HEK293 (cell line): ENCODE measurements at regions of chr19 and their contacts with region 1.

Region 1: DNA sequence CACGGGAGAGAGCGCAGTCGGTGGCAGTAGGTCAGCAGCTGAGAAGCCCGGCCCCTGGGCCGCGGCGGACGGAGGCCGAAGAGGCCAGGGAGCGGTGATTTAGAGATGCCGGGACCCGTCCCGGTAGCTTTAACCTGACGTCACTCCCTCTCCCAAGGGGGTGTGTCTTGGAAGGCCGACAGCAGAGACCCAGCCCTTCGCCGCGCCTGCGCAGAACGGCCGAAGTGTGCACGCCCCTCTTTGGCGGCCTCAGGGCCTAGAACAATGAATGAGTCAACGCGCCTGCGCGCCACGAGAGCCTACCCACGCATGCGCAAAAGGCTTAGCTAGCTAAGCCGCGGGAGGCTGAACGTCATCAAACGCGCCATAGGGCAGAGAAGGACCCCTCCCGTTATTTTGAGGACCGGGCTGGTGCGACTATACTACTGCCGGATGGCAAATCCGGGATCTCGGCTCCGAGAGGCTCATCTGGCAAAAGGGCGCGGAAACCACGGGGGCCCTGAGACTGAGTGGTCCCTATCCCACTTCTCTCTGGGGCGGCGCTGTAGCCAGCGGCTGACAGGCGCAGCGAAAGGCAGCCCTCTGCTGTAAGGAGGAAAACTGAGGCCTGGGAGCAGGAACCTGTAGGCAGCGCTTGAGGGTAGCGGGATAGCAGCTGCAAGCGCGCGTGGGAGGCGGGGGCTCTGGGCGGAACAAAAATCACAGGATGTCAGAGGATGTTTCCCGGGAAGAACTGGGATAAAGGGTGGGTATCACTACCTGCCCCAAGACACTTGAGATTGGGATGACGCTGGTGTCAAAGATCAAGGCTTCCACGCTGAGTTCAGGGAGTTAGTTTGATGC is at the starts of genes IRGQ and ZNF576:
- H3K4me3 ChIP-seq: peak within 1 kb of the TSS; percentile 54
- H3K27ac ChIP-seq: peak within 1 kb of the TSS; percentile 95
- H3K4me1 ChIP-seq: peaks cover 24% of the 10 kb centered on the region
- CTCF ChIP-seq: peak; percentile 99

Region 2: GRCh38 chr19:43290568-43291359 is 305.5 kb before region 1 on chr19:
- CTCF ChIA-PET with region 1: no interaction called
- POLR2A ChIA-PET with region 1: no interaction called
- H3K4me3 ChIP-seq: no peak overlapping the region
- H3K27ac ChIP-seq: no peak overlapping the region
- H3K4me1 ChIP-seq: 0 out of 2 replicates have a peak, but pooled peaks cover 3% of the 10 kb centered on the region
- CTCF ChIP-seq: no peak

Region 3: GRCh38 chr19:43519436-43520088 is 76.7 kb before region 1 on chr19:
- CTCF ChIA-PET with region 1: interaction called, 35 read pairs
- POLR2A ChIA-PET with region 1: interaction called, 9 read pairs
- H3K4me3 ChIP-seq: no peak overlapping the region
- H3K27ac ChIP-seq: no peak overlapping the region
- H3K4me1 ChIP-seq: peaks cover 3% of the 10 kb centered on the region; the same call in 1 of the 2 replicates
- CTCF ChIP-seq: peak; percentile 92

Region 4: GRCh38 chr19:43532962-43533545 is 63.2 kb before region 1 on chr19 and contains the start of gene ZNF575:
- CTCF ChIA-PET with region 1: interaction called, 26 read pairs
- POLR2A ChIA-PET with region 1: interaction called, 18 read pairs
- H3K4me3 ChIP-seq: peak within 1 kb of the TSS; percentile 9
- H3K27ac ChIP-seq: peak within 1 kb of the TSS; percentile 73
- H3K4me1 ChIP-seq: peaks cover 26% of the 10 kb centered on the region
- CTCF ChIP-seq: no peak; the same call in 1 of the 2 replicates

Region 5: GRCh38 chr19:43564800-43565199 is 31.4 kb before region 1 on chr19:
- CTCF ChIA-PET with region 1: interaction called, 91 read pairs
- POLR2A ChIA-PET with region 1: interaction called, 10 read pairs
- H3K4me3 ChIP-seq: no peak overlapping the region
- H3K27ac ChIP-seq: no peak overlapping the region
- H3K4me1 ChIP-seq: peaks cover 2% of the 10 kb centered on the region; the same call in 1 of the 2 replicates
- CTCF ChIP-seq: no peak

Region 6: DNA sequence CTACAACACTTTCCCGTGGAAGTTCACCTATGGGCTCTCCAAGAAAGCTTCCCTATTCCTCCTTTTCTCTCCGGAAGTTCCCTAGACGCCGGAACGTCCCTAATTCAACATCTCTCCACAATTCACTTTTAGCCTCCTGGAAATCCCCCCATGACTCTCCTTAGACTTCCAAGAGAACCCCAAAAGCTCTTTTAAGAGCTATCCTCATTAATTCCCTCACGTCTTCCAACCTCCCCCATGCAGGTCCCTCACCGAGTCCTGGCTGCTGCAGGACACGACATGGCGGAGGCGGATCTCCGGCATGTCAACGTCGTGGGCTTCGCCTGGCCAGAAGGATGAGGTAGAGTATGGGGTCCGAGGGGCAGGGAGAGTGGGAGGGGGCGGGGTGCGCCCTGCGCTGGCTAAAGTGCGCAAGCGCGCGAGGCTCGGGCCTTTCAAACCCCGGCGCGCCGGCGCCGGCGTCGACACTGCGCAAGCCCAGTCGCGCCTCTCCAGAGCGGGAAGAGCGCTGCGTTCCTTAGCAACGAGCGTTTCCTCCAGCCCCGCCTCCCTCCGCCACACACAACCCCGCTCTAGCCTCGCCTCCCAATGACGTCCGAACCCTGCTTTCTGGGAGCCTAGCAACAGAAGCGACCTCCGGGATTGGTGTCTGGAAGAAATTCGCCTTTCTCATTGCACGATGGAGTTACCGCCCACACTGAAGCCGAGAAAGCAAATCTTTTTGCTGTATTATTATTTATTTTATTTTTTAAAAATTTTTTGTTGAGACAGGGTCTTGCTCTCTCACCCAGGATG is 20.9 kb before region 1 on chr19 and contains the starts of genes PINLYP and XRCC1:
- CTCF ChIA-PET with region 1: interaction called, 22 read pairs
- POLR2A ChIA-PET with region 1: interaction called, 23 read pairs
- H3K4me3 ChIP-seq: peak within 1 kb of the TSS; percentile 73
- H3K27ac ChIP-seq: peak within 1 kb of the TSS; percentile 80
- H3K4me1 ChIP-seq: peaks cover 39% of the 10 kb centered on the region
- CTCF ChIP-seq: 0 out of 2 replicates have a peak, but pooled peaks have one; percentile 27

Region 7: GRCh38 chr19:43606569-43607229 is 10.5 kb after region 1 on chr19:
- CTCF ChIA-PET with region 1: interaction called, 6 read pairs
- POLR2A ChIA-PET with region 1: interaction called, 19 read pairs
- H3K4me3 ChIP-seq: no peak overlapping the region
- H3K27ac ChIP-seq: peak overlapping the region; percentile 58
- H3K4me1 ChIP-seq: peaks cover 28% of the 10 kb centered on the region
- CTCF ChIP-seq: no peak

Region 8: GRCh38 chr19:43695985-43696704 is 99.9 kb after region 1 on chr19:
- CTCF ChIA-PET with region 1: no interaction called
- POLR2A ChIA-PET with region 1: no interaction called
- H3K4me3 ChIP-seq: no peak overlapping the region
- H3K27ac ChIP-seq: no peak overlapping the region
- H3K4me1 ChIP-seq: no peaks in the 10 kb centered on the region; the same call in 1 of the 2 replicates
- CTCF ChIP-seq: no peak

Region 9: DNA sequence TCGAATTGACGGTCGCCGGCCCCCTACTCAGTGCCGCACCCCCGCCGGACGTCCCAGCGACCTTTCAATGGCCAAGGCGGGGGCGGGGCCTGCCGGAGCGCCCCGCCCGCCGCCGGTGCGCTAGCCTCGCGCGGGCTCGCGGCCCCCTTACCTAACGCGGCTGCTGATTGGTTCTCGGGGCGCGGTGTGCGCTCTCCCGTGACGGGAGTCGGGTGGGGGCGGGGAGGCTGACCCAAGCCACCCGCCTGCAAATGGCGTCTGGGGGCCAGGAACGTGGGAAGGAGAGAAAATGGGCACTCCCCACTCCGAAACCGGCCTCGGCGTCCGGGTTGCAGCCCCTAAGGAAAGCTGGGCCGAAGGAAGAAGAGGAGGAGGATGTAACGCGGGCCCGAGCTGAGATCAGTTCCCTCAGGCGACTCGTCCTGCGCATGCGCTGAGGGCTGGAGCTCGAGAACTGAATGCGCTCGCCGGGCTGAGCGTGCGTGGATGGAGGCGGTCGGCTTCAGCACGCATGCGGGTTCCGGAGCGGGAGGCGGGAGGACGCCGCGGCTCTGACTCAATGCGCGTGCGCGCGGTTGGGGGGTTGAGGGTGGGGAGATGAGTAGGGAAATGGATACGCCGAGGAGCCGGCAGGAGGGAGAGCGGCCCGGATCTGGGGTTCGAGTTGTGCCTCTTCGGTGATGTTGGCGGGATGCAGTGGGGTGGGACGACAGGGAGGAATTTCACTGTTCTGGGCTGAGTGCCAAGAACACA is 158.5 kb after region 1 on chr19 and contains the start of gene SMG9:
- CTCF ChIA-PET with region 1: interaction called, 4 read pairs
- POLR2A ChIA-PET with region 1: interaction called, 10 read pairs
- H3K4me3 ChIP-seq: peak within 1 kb of the TSS; percentile 60
- H3K27ac ChIP-seq: peak within 1 kb of the TSS; percentile 100
- H3K4me1 ChIP-seq: peaks cover 32% of the 10 kb centered on the region
- CTCF ChIP-seq: no peak; the same call in 1 of the 2 replicates

Region 10: DNA sequence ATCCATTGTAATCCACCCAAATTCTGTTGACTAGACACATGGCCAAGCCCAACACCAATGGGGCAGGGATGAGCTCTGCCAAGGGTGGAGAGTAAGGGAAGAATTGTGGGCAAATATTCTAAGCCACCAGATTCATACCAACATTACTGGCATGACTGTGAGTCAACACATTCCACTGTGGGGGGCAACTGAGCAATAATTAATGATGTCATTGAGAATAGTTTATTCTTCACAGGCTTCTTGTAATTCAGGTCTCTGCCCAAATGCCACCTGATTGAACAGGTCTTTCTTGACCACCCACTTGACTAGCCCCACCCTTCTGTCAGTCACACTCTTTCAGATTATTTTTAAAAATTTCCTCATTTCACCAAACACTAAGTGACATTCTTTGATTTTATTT is 259.4 kb after region 1 on chr19:
- CTCF ChIA-PET with region 1: no interaction called
- POLR2A ChIA-PET with region 1: no interaction called
- H3K4me3 ChIP-seq: no peak overlapping the region
- H3K27ac ChIP-seq: no peak overlapping the region
- H3K4me1 ChIP-seq: no peaks in the 10 kb centered on the region
- CTCF ChIP-seq: no peak